ENCODE measurements at regions of chr10 and their contacts with region 1.

Region 1: DNA sequence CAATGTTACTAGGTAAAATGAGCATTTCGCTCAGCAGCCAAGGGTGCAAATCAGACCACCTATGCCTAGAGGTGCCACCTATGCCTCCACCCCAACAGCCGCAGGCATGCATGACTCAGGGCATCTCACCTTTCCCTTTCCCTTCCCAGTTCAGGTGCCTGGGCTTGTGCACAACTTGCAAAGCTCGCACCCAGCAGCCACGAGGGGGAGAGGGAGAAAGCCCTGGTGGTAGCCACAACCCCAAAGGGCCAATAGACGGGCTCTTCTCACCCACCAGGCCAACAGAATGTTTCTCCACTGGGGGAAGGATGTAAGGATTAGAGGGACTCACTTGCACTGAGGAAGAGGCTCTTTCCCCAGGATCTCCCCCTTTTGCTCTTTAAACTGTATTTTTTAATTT is 462.3 kb upstream of the PCDH15 start:
- DNase-seq: no peak
- ATAC-seq: peak; percentile 20
- H3K4me3 ChIP-seq: no peak overlapping the region
- H3K27ac ChIP-seq: no peak overlapping the region
- H3K4me1 ChIP-seq: no peaks in the 10 kb centered on the region
- H3K27me3 ChIP-seq: no peaks in the 10 kb centered on the region
- CTCF ChIP-seq: no peak

Region 2: GRCh38 chr10:53839440-53840039 is 1423.8 kb before region 1 on chr10:
- CTCF ChIA-PET with region 1: no interaction called
- POLR2A ChIA-PET with region 1: no interaction called
- intact Hi-C with region 1: loop called (anchors 5 kb)
- DNase-seq: peak; percentile 78
- ATAC-seq: no peak
- H3K4me3 ChIP-seq: no peak overlapping the region
- H3K27ac ChIP-seq: no peak overlapping the region
- H3K4me1 ChIP-seq: peaks cover 9% of the 10 kb centered on the region; the same call in 1 of the 2 replicates
- H3K27me3 ChIP-seq: no peaks in the 10 kb centered on the region
- CTCF ChIP-seq: peak; percentile 71

Region 3: GRCh38 chr10:54133203-54133602 is 1130.1 kb before region 1 on chr10:
- CTCF ChIA-PET with region 1: interaction called, 3 read pairs
- POLR2A ChIA-PET with region 1: no interaction called
- intact Hi-C with region 1: loop called (anchors 5 kb)
- DNase-seq: peak; percentile 54
- ATAC-seq: peak; percentile 63
- H3K4me3 ChIP-seq: no peak overlapping the region
- H3K27ac ChIP-seq: no peak overlapping the region
- H3K4me1 ChIP-seq: no peaks in the 10 kb centered on the region
- H3K27me3 ChIP-seq: no peaks in the 10 kb centered on the region
- CTCF ChIP-seq: peak; percentile 91

Region 4: GRCh38 chr10:54985732-54986131 is 277.6 kb before region 1 on chr10:
- CTCF ChIA-PET with region 1: no interaction called
- POLR2A ChIA-PET with region 1: no interaction called
- intact Hi-C with region 1: loop called (anchors 1 kb)
- DNase-seq: peak; percentile 72
- ATAC-seq: peak; percentile 73
- H3K4me3 ChIP-seq: no peak overlapping the region
- H3K27ac ChIP-seq: no peak overlapping the region
- H3K4me1 ChIP-seq: no peaks in the 10 kb centered on the region
- H3K27me3 ChIP-seq: no peaks in the 10 kb centered on the region
- CTCF ChIP-seq: peak; percentile 90

Region 5: GRCh38 chr10:55091691-55092328 is 171.5 kb before region 1 on chr10:
- CTCF ChIA-PET with region 1: interaction called, 7 read pairs
- POLR2A ChIA-PET with region 1: no interaction called
- intact Hi-C with region 1: loop called (anchors 1 kb)
- DNase-seq: peak; percentile 54
- ATAC-seq: no peak
- H3K4me3 ChIP-seq: no peak overlapping the region
- H3K27ac ChIP-seq: no peak overlapping the region
- H3K4me1 ChIP-seq: no peaks in the 10 kb centered on the region
- H3K27me3 ChIP-seq: no peaks in the 10 kb centered on the region
- CTCF ChIP-seq: peak; percentile 91

Region 6: GRCh38 chr10:55146032-55146431 is 117.3 kb before region 1 on chr10:
- CTCF ChIA-PET with region 1: no interaction called
- POLR2A ChIA-PET with region 1: no interaction called
- intact Hi-C with region 1: loop called (anchors 5 kb)
- DNase-seq: peak; percentile 48
- ATAC-seq: peak; percentile 91
- H3K4me3 ChIP-seq: no peak overlapping the region
- H3K27ac ChIP-seq: no peak overlapping the region
- H3K4me1 ChIP-seq: no peaks in the 10 kb centered on the region
- H3K27me3 ChIP-seq: no peaks in the 10 kb centered on the region
- CTCF ChIP-seq: no peak

Region 7: GRCh38 chr10:55305280-55305679 is 42.0 kb after region 1 on chr10:
- CTCF ChIA-PET with region 1: no interaction called
- POLR2A ChIA-PET with region 1: no interaction called
- intact Hi-C with region 1: no loop called
- DNase-seq: no peak
- ATAC-seq: no peak
- H3K4me3 ChIP-seq: no peak overlapping the region
- H3K27ac ChIP-seq: no peak overlapping the region
- H3K4me1 ChIP-seq: no peaks in the 10 kb centered on the region
- H3K27me3 ChIP-seq: no peaks in the 10 kb centered on the region
- CTCF ChIP-seq: no peak

Measured in PC-3 (cell line).